Aorta (tissue), 5 donors: ENCODE measurements at regions of chr10 and their contacts with region 1.

Region 1: DNA sequence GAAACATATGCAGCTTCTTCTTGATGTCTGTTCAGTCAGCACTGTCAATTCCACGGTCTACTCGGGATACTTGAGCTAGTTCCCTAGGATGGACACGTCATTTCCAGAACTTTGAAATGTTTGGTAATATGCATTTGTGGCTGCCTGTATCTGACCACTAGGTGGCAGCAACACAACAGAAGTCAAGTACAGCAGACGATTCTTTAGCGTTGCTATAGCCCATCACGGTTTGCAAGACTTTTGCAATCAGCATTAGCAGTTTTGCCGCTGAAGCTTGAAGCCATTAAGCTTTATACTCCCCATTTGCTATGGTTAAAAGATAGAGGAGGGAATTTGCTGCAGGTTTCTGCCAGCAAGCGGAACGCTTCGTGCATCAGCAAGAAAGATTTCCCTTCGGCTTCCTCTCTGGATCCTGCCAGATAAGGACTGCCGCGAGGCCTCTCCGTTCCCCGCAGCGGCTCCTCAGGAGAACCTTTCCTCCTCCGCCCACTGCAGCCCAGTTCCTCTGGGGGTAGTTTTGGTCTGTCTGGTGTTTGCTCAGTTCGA is 63.5 kb downstream of the ABCC2 start:
- DNase-seq: peak in 1 of 2 donors; percentile 78
- ATAC-seq: peak; percentile 91
- H3K4me3 ChIP-seq: no peak overlapping the region
- H3K27ac ChIP-seq: no peak overlapping the region
- H3K4me1 ChIP-seq: no peaks in the 10 kb centered on the region
- H3K27me3 ChIP-seq: no peaks in the 10 kb centered on the region

Region 2: DNA sequence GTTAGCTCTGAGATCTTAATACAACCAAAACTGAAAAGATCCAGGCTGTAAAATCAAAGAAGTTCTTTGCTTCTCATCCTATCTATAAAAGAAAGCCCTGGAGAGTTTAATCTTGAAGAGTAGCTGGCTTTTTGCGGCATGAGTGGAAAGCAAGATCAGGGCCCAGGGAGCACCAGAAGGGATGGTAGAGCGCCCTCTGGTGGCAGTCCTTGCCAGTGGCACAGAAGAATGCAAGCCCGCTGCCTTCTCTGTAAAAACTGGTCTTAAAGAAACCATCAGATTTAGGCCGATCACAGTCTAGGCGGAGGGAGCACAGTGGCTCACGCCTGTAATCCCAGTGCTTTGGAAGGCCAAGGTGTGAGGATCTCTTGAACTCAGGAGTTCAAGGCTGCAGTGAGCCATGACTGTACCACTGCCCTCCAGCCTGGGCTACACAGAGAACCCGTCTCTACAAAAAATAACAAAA is 200.1 kb after region 1 on chr10:
- intact Hi-C with region 1: loop called (anchors 1 to 5 kb)
- DNase-seq: peak; percentile 91 to 96
- ATAC-seq: peak; percentile 92
- H3K4me3 ChIP-seq: no peak overlapping the region
- H3K27ac ChIP-seq: no peak overlapping the region
- H3K4me1 ChIP-seq: no peaks in the 10 kb centered on the region
- H3K27me3 ChIP-seq: no peaks in the 10 kb centered on the region